ENCODE measurements at regions of chr22 and their contacts with region 1.

Region 1: GRCh38 chr22:44455151-44455962 is 42.7 kb downstream of the RTL6 start:
- DNase-seq: peak; percentile 82
- H3K4me3 Mint-ChIP-seq: peak overlapping the region; percentile 43
- H3K27ac Mint-ChIP-seq: peak overlapping the region; percentile 86
- H3K4me1 Mint-ChIP-seq: peaks cover 31% of the 10 kb centered on the region
- H3K27me3 Mint-ChIP-seq: no peaks in the 10 kb centered on the region

Region 2: GRCh38 chr22:44497218-44497904 is 42.0 kb after region 1 on chr22:
- intact Hi-C with region 1: loop called (anchors 5 kb)
- DNase-seq: no peak
- H3K4me3 Mint-ChIP-seq: peak overlapping the region; percentile 24
- H3K27ac Mint-ChIP-seq: peak overlapping the region; percentile 63
- H3K4me1 Mint-ChIP-seq: peaks cover 19% of the 10 kb centered on the region
- H3K27me3 Mint-ChIP-seq: peaks cover 4% of the 10 kb centered on the region

Measured in activated CD4-positive, alpha-beta T cell treated with anti-CD3 and anti-CD28 coated beads, Interleukin-2, amount 10 ng/mL, durations not matched to agents 24 days and 14 days (primary cell).